Common myeloid progenitor, CD34-positive (primary cell): ENCODE measurements at regions of chr3 and their contacts with region 1.

Region 1: DNA sequence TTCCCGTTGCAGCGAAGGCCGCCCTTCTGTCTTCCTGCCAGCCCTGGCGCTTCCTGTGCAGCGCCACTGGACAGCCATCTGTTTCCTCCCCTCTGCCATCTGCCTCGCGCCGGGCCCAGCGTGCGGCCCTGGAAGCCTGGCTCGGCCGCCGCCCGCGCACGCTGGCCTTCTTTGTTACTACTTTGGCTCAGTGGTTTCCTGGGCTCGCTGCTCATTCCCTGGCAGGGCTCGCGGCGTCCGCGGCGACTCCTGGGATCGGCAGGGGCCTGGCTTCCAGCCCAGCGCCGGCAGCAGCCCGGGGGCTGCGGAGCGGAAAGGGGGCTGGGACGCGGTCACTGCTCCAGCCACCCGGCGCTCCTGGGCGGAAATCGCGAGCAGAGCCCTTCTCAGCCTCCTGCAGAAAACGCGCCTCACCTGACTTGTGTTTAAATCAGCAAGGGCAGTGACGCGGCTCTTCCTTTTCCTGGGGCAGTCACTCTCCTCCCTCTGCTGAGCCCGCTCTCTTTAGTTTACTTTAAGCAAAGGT is 10.0 kb downstream of the CMTM7 start:
- DNase-seq: peak; percentile 80 to 98 (median 97)
- H3K4me3 ChIP-seq: peak overlapping the region in 5 of 7 experiments; percentile 23 to 69 (median 64)
- H3K27ac ChIP-seq: peak overlapping the region; percentile 84 to 91
- H3K4me1 ChIP-seq: peaks cover 25 to 90% (median 64%) of the 10 kb centered on the region in 4 experiments
- H3K27me3 ChIP-seq: no peaks in the 10 kb centered on the region

Region 2: DNA sequence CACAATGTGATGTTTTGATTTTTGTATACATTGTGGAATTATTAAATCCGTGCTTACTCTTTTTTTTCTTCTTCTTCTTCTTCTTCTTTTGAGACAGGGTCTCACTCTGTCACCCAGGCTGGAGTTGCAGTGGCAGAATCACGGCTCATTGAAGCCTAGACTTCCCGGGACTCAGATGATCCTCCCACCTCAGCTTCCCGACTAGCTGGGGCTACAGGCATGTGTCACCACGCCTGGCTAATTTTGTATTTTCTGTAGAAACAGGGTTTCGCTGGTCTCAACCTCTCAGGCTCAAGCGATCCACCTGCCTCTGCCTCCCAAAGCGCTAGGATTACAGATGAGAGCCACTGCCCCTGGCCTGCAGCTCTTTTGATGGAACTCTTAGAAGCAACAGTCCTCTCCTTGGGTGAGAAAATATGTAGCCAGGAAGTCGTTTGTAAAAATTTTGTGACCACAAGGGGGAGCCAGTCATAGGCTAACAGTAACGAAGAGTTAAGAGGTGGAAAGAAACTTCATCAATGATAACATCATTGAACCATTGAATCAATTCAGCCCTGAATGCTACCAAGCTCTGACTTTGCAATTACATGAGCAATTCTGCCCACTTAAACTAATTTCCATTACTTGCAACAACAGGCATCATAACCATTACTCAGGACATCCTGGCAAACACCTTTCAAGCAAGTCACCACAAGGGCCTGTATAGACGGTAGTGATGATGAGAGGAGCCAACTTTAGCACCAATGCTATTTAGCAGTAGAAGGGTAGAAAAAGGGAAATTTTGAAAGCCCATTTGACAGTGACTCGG is 26.6 kb before region 1 on chr3:
- CTCF ChIA-PET with region 1: interaction called, 132 read pairs
- POLR2A ChIA-PET with region 1: interaction called, 3 read pairs
- DNase-seq: peak; percentile 82 to 91 (median 85)
- H3K4me3 ChIP-seq: no peak overlapping the region
- H3K27ac ChIP-seq: no peak overlapping the region
- H3K4me1 ChIP-seq: peaks cover 2 to 7% (median 4%) of the 10 kb centered on the region in 4 experiments
- H3K27me3 ChIP-seq: no peaks in the 10 kb centered on the region

Region 3: DNA sequence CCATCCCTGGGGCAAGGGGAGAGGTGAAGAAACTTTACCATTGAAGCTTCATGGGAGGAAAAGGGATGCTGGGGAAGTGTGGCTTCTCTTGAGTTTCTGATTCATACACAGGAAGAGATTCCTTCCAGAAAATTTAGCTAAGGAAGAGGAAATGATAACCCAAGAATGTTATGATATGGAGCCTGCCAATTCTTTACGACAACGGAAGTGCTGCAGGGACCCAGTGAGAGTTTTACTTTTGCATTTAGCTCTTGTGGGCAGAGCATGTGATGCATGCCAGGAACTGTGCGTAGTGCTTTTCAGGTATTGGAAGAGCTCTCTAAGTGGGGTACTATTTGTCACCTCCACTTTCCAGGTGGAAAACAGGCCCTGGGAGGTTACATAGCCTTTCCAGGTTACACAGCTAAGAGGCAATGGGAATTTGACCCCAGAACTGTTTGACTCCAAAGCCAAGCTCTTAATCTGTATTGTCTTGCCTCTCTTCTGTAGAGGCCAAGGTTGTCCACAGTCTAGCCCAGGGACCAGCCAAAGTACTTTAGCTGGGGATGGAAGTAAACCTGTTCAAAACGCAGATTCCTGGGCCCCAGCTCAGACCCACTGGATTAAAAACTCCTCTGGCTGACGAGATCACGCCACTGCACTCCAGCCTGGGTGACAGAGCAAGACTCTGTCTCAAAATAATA is 13.0 kb after region 1 on chr3:
- CTCF ChIA-PET with region 1: interaction called, 27 read pairs
- POLR2A ChIA-PET with region 1: interaction called, 4 read pairs
- DNase-seq: peak in 2 of 3 donors; percentile 69 to 72
- H3K4me3 ChIP-seq: peak overlapping the region in 2 of 7 experiments; percentile 45 to 58
- H3K27ac ChIP-seq: peak overlapping the region in 1 of 2 experiments; percentile 57
- H3K4me1 ChIP-seq: peaks cover 20 to 59% (median 35%) of the 10 kb centered on the region in 4 experiments
- H3K27me3 ChIP-seq: no peaks in the 10 kb centered on the region

Region 4: DNA sequence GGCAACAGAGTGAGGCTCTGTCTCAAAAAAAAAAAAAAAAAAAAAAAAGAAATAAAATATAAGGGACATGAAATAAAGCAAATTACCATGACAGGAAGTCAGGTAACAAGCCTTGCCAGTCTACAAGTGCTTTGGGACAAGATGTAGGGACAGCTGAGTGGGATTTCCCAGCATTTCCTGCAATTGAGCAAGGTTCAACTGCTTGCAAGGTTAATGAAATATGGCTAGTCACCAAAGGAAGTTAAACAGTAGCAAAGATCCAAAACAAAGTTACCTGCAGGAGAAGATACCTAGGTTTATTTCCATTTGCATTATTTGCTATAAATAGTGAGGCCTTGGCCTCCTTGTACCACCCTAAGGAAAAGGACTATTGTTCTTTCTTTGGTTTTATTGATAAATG is 261.0 kb after region 1 on chr3:
- CTCF ChIA-PET with region 1: no interaction called
- POLR2A ChIA-PET with region 1: no interaction called
- DNase-seq: no peak
- H3K4me3 ChIP-seq: no peak overlapping the region
- H3K27ac ChIP-seq: no peak overlapping the region
- H3K4me1 ChIP-seq: no peaks in the 10 kb centered on the region
- H3K27me3 ChIP-seq: no peaks in the 10 kb centered on the region